Aorta (tissue), 5 donors: ENCODE measurements at regions of chr21 and their contacts with region 1.

Region 1: GRCh38 chr21:39788383-39788782 is 43.4 kb downstream of the IGSF5 start:
- DNase-seq: peak; percentile 69 to 90
- ATAC-seq: peak; percentile 92
- H3K4me3 ChIP-seq: no peak overlapping the region
- H3K27ac ChIP-seq: no peak overlapping the region
- H3K4me1 ChIP-seq: no peaks in the 10 kb centered on the region
- H3K27me3 ChIP-seq: no peaks in the 10 kb centered on the region

Region 2: GRCh38 chr21:39673736-39674135 is 114.6 kb before region 1 on chr21:
- intact Hi-C with region 1: no loop called
- DNase-seq: no peak
- ATAC-seq: no peak
- H3K4me3 ChIP-seq: no peak overlapping the region
- H3K27ac ChIP-seq: no peak overlapping the region
- H3K4me1 ChIP-seq: no peaks in the 10 kb centered on the region
- H3K27me3 ChIP-seq: no peaks in the 10 kb centered on the region

Region 3: GRCh38 chr21:39867198-39867650 is 78.8 kb after region 1 on chr21 and contains the start of gene PCP4:
- intact Hi-C with region 1: loop called in 1 of 2 experiments (anchors 5 kb)
- DNase-seq: no peak
- ATAC-seq: peak; percentile 61
- H3K4me3 ChIP-seq: no peak within 1 kb of the TSS
- H3K27ac ChIP-seq: no peak within 1 kb of the TSS
- H3K4me1 ChIP-seq: no peaks in the 10 kb centered on the region
- H3K27me3 ChIP-seq: no peaks in the 10 kb centered on the region
- total RNA-seq, gene PCP4: 3.2 TPM in 1 of 2 donors, not detected in the other